ENCODE measurements at regions of chr12 and their contacts with region 1.

Region 1: GRCh38 chr12:57124259-57124877 is 3.9 kb upstream of the LRP1 start:
- DNase-seq: peak; percentile 89
- ATAC-seq: peak; percentile 75
- H3K4me3 Mint-ChIP-seq: no peak overlapping the region
- H3K27ac Mint-ChIP-seq: no peak overlapping the region
- H3K4me1 Mint-ChIP-seq: peaks cover 5% of the 10 kb centered on the region
- H3K27me3 Mint-ChIP-seq: no peaks in the 10 kb centered on the region
- CTCF ChIP-seq: peak; percentile 91

Region 2: GRCh38 chr12:57069523-57069922 is 54.8 kb before region 1 on chr12:
- CTCF ChIA-PET with region 1: interaction called, 16 read pairs
- POLR2A ChIA-PET with region 1: interaction called, 3 read pairs
- intact Hi-C with region 1: no loop called
- DNase-seq: peak; percentile 79
- ATAC-seq: peak; percentile 90
- H3K4me3 Mint-ChIP-seq: peak overlapping the region; percentile 62
- H3K27ac Mint-ChIP-seq: peak overlapping the region; percentile 90
- H3K4me1 Mint-ChIP-seq: peaks cover 71% of the 10 kb centered on the region
- H3K27me3 Mint-ChIP-seq: no peaks in the 10 kb centered on the region
- CTCF ChIP-seq: peak; percentile 86

Region 3: GRCh38 chr12:57169046-57169795 is 44.9 kb after region 1 on chr12:
- CTCF ChIA-PET with region 1: interaction called, 153 read pairs
- POLR2A ChIA-PET with region 1: interaction called, 4 read pairs
- intact Hi-C with region 1: no loop called
- DNase-seq: no peak
- ATAC-seq: no peak
- H3K4me3 Mint-ChIP-seq: no peak overlapping the region
- H3K27ac Mint-ChIP-seq: no peak overlapping the region
- H3K4me1 Mint-ChIP-seq: peaks cover 9% of the 10 kb centered on the region
- H3K27me3 Mint-ChIP-seq: no peaks in the 10 kb centered on the region
- CTCF ChIP-seq: no peak

Region 4: GRCh38 chr12:57182921-57183790 is 58.8 kb after region 1 on chr12:
- CTCF ChIA-PET with region 1: interaction called, 143 read pairs
- POLR2A ChIA-PET with region 1: interaction called, 4 read pairs
- intact Hi-C with region 1: loop called (anchors 5 kb)
- DNase-seq: peak; percentile 90
- ATAC-seq: peak; percentile 100
- H3K4me3 Mint-ChIP-seq: no peak overlapping the region
- H3K27ac Mint-ChIP-seq: no peak overlapping the region
- H3K4me1 Mint-ChIP-seq: no peaks in the 10 kb centered on the region
- H3K27me3 Mint-ChIP-seq: no peaks in the 10 kb centered on the region
- CTCF ChIP-seq: peak; percentile 72

Region 5: DNA sequence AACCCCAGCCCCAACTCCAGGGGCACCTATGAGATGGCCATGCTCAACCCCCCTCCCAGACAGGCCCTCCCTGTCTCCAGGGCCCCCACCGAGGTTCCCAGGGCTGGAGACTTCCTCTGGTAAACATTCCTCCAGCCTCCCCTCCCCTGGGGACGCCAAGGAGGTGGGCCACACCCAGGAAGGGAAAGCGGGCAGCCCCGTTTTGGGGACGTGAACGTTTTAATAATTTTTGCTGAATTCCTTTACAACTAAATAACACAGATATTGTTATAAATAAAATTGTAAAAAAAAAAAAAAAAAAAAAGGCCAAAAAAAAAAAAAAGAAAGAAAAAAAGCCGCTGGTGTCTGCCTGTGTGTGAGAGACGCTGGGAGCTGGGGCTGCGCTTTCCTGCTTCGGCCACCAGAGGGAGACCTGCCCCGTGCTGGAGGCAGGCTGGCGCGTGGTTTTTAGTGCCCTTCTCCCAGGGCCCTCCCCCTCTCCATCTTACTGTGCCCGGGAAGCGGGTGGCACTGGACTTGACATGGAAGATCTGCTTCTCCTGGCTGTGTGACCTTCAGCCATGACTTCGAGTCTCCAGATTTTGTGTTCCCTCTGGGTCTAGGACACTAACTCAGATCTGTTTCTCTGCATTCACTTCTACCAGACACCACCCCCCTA is 88.8 kb after region 1 on chr12:
- CTCF ChIA-PET with region 1: interaction called, 16 read pairs
- POLR2A ChIA-PET with region 1: no interaction called
- intact Hi-C with region 1: no loop called
- DNase-seq: peak; percentile 89
- ATAC-seq: peak; percentile 71
- H3K4me3 Mint-ChIP-seq: no peak overlapping the region
- H3K27ac Mint-ChIP-seq: no peak overlapping the region
- H3K4me1 Mint-ChIP-seq: peaks cover 27% of the 10 kb centered on the region
- H3K27me3 Mint-ChIP-seq: peaks cover 38% of the 10 kb centered on the region
- CTCF ChIP-seq: peak; percentile 92